SK-N-SH (cell line): ENCODE measurements at regions of chr10 and their contacts with region 1.

Region 1: DNA sequence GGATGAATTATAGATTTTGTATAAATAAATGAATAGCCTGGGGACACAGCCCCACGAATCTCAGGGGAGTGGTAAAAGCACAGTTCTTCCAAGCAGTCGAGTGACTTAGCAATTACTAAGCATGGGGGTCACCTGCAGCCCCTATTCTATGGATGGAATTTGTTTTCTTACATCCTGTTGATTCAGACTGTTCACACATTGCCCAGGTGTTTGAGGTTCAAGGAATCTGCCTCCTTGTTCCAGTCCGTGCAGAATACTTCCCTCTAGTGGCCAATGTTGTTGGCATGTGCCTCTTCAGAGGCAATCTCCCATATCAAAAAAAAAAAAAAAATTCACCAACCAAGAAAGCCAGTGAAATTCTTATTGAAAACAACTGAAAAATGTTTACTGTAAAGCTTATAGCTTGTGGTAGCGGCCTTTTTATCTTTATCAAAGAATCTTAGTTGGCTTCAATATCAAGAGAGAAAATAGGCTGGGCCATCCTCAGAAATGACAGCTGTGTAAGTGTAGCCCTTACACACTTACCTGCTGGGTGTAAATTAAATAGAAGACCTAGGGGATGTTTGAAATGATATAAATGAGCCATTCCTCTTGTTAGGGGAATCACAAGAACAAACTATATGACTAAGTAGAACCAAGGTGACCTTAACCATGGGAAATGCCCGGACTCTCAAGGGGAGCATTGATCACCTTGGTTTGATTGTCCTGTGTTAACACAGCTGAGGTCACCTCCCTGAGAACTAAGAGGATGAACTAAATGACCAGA is 7.8 kb downstream of the LIPM start:
- DNase-seq: peak; percentile 36
- H3K4me3 ChIP-seq: no peak overlapping the region; a peak in 1 of 4 replicates
- H3K27ac ChIP-seq: no peak overlapping the region
- H3K4me1 ChIP-seq: peaks cover 0 to 1% of the 10 kb centered on the region in 2 experiments; a peak in 1 of 4 replicates
- H3K27me3 ChIP-seq: no peaks in the 10 kb centered on the region
- CTCF ChIP-seq: peak; percentile 92
- EP300 ChIP-seq: no peak
- RAD21 ChIP-seq: peak; percentile 76

Region 2: GRCh38 chr10:88579031-88579430 is 231.3 kb before region 1 on chr10:
- CTCF ChIA-PET with region 1: interaction called, 16 read pairs
- POLR2A ChIA-PET with region 1: no interaction called
- DNase-seq: no peak
- H3K4me3 ChIP-seq: no peak overlapping the region
- H3K27ac ChIP-seq: no peak overlapping the region
- H3K4me1 ChIP-seq: no peaks in the 10 kb centered on the region
- H3K27me3 ChIP-seq: no peaks in the 10 kb centered on the region
- CTCF ChIP-seq: no peak
- EP300 ChIP-seq: no peak
- RAD21 ChIP-seq: no peak

Region 3: GRCh38 chr10:88820748-88821389 is 10.5 kb after region 1 on chr10:
- CTCF ChIA-PET with region 1: interaction called, 18 read pairs
- POLR2A ChIA-PET with region 1: no interaction called
- DNase-seq: no peak
- H3K4me3 ChIP-seq: no peak overlapping the region
- H3K27ac ChIP-seq: peak overlapping the region in 1 of 2 experiments; percentile 30; a peak in 1 of 4 replicates
- H3K4me1 ChIP-seq: peaks cover 0 to 7% of the 10 kb centered on the region in 2 experiments; a peak in 1 of 4 replicates
- H3K27me3 ChIP-seq: no peaks in the 10 kb centered on the region
- CTCF ChIP-seq: no peak
- EP300 ChIP-seq: no peak
- RAD21 ChIP-seq: no peak